ENCODE measurements at regions of chr5 and their contacts with region 1.

Region 1: GRCh38 chr5:8756498-8757084 is 789.3 kb downstream of the SEMA5A start:
- DNase-seq: no peak
- H3K4me3 ChIP-seq: no peak overlapping the region
- H3K27ac ChIP-seq: no peak overlapping the region
- H3K4me1 ChIP-seq: no peaks in the 10 kb centered on the region
- H3K27me3 ChIP-seq: no peaks in the 10 kb centered on the region
- CTCF ChIP-seq: no peak

Region 2: DNA sequence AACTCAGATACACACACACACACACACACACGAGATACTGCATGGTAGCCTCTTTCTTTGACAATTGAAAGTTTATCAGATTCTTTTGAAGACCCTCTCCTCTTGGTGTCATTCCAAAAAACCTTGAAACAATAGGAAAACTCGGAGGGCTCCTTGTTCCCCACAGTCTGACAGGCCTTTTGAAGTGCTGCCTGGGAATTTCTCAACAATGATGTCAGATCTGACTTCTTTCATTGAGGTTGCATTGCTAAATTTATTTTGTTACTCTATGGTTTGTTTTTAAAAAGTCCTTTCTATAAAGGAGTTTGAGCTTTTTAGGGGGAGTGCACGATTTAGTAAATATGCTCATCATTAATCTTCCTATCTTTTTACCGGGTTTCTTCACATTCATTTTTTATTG is 205.4 kb after region 1 on chr5:
- CTCF ChIA-PET with region 1: no interaction called
- POLR2A ChIA-PET with region 1: no interaction called
- intact Hi-C with region 1: no loop called
- DNase-seq: no peak
- H3K4me3 ChIP-seq: no peak overlapping the region
- H3K27ac ChIP-seq: no peak overlapping the region
- H3K4me1 ChIP-seq: no peaks in the 10 kb centered on the region
- H3K27me3 ChIP-seq: no peaks in the 10 kb centered on the region
- CTCF ChIP-seq: no peak

Region 3: GRCh38 chr5:9207817-9208418 is 451.3 kb after region 1 on chr5:
- CTCF ChIA-PET with region 1: no interaction called
- POLR2A ChIA-PET with region 1: no interaction called
- intact Hi-C with region 1: loop called (anchors 10 kb)
- DNase-seq: peak; percentile 49
- H3K4me3 ChIP-seq: no peak overlapping the region
- H3K27ac ChIP-seq: no peak overlapping the region
- H3K4me1 ChIP-seq: no peaks in the 10 kb centered on the region
- H3K27me3 ChIP-seq: no peaks in the 10 kb centered on the region
- CTCF ChIP-seq: peak; percentile 58

Region 4: GRCh38 chr5:9547122-9547947 is 790.7 kb after region 1 on chr5:
- CTCF ChIA-PET with region 1: no interaction called
- POLR2A ChIA-PET with region 1: no interaction called
- intact Hi-C with region 1: no loop called
- DNase-seq: no peak
- H3K4me3 ChIP-seq: no peak overlapping the region
- H3K27ac ChIP-seq: no peak overlapping the region
- H3K4me1 ChIP-seq: peaks cover 11% of the 10 kb centered on the region
- H3K27me3 ChIP-seq: peaks cover 24% of the 10 kb centered on the region
- CTCF ChIP-seq: no peak

Measured in A673 (cell line).